AG04449 (cell line): ENCODE measurements at regions of chr15 and their contacts with region 1.

Region 1: GRCh38 chr15:82139823-82140268 is 94.0 kb upstream of the MEX3B start:
- DNase-seq: no peak
- H3K4me3 ChIP-seq: no peak overlapping the region
- CTCF ChIP-seq: peak; percentile 48

Region 2: DNA sequence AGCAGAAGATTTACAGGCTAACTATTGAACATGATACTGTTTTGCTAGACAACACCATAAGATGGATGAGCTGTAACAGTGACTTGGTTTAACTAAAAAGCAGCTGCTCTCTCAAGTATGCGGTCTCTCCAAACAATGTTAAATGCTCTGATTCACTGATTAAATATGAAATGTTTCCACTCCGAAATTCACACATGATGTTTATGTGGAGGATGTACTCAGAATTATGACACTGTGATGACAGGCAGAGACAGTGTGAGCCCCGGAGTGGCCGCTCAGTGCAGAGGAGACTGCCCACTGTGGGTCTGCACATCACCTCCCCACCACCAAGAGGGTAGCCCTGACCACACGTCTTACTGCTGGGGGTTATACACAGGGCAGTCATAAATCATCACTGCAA is 10.1 kb before region 1 on chr15:
- CTCF ChIA-PET with region 1: interaction called, 23 read pairs
- POLR2A ChIA-PET with region 1: interaction called, 3 read pairs
- DNase-seq: peak; percentile 88
- H3K4me3 ChIP-seq: no peak overlapping the region
- CTCF ChIP-seq: no peak

Region 3: GRCh38 chr15:82150645-82151044 is 10.8 kb after region 1 on chr15:
- CTCF ChIA-PET with region 1: interaction called, 18 read pairs
- POLR2A ChIA-PET with region 1: no interaction called
- DNase-seq: no peak
- H3K4me3 ChIP-seq: no peak overlapping the region
- CTCF ChIP-seq: no peak

Region 4: GRCh38 chr15:82158811-82159210 is 19.0 kb after region 1 on chr15:
- CTCF ChIA-PET with region 1: interaction called, 18 read pairs
- POLR2A ChIA-PET with region 1: no interaction called
- DNase-seq: no peak
- H3K4me3 ChIP-seq: no peak overlapping the region
- CTCF ChIP-seq: no peak